Posterior vena cava (tissue), 2 donors: ENCODE measurements at regions of chr22 and their contacts with region 1.

Region 1: DNA sequence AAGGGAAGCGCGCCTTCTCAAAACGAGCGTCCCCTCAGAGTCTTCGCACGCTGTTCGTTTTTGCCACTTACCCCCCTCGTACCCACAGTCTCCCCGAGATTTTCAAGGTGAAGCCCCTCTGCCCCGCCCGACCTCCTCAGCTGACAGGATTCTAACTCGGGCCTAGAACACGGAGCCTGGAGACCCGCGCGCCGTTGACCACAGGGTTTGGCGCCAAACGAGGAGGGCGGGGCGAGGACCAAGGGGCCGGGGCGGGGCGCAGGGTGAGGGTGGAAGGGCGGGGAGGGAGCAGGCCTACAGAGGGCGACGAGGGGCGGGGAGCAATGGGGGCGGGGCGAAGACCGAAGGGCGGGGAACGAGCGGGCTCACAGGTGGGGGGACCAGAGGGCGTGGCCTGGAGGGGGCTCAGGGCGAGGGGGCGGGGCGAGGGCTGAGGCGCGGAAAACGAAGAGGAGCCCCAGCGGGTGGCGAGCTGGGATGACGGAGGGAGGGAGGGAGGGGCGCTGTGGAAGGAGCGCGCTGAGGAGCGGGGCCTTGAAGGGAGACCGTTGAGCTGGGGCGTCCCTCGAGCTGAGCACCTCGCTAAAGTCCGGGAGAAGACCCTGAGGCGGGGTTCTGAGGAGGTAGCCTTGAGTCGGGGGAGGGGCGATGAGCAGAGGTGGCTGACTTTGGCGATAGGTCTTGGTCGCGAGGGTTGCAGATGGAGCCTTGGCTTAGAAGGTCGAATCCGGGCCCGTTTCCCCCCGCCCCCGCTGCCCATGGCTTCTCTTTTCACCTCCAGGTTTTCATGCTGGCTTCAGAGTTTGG is at the start of gene DMC1:
- DNase-seq: peak; percentile 96
- total RNA-seq, gene DMC1: 1.4 to 2.4 TPM

Region 2: GRCh38 chr22:38040953-38041759 is 529.0 kb before region 1 on chr22:
- intact Hi-C with region 1: loop called in 1 of 2 experiments (anchors 10 kb)
- DNase-seq: no peak

Region 3: GRCh38 chr22:38415561-38416321 is 154.4 kb before region 1 on chr22:
- intact Hi-C with region 1: loop called in 1 of 2 experiments (anchors 5 kb)
- DNase-seq: peak; percentile 72